MCF 10A (cell line): ENCODE measurements at regions of chr13 and their contacts with region 1.

Region 1: DNA sequence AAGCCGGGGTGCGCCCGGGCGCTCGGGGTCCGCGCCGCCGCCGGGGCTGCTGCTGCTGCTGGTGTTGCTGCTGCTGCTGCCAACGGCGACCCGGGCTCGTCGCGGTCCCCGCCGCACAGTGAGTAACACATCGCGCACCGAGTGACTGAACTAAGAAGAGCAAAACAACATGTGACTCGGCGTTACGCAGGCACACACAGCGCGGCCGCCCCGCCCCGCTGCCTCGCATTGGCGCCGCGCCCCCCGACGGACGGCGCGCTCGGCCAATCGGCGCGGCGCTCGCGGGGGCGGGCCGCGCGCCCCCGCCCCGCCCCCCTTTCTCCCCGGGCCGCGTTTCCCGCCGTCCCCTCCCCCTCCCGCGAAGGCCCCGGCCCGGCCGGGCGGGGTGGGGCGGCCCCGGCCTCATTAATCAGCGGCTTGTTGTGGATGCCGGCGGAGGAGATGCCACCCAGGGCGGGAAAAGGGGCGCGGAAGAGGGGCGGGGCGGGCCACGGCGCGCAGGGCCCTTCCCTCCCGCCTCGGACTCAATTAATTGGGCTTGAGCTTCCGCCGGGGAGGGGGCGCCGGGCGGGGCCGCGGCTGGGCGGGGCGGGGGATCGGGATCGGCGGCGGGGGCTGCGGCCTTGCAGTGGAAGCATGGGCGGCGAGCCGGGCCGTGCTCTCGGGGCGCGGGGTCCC is at the start of gene IRS2:
- DNase-seq: peak; percentile 92
- H3K4me3 Mint-ChIP-seq: peak within 1 kb of the TSS; percentile 84
- H3K27ac Mint-ChIP-seq: peak within 1 kb of the TSS; percentile 31
- H3K4me1 Mint-ChIP-seq: peaks cover 33% of the 10 kb centered on the region
- H3K27me3 Mint-ChIP-seq: no peaks in the 10 kb centered on the region
- CTCF ChIP-seq: no peak
- total RNA-seq, gene IRS2: 41.8 and 48.5 TPM in 2 replicates

Region 2: GRCh38 chr13:108961542-108962125 is 825.0 kb before region 1 on chr13:
- CTCF ChIA-PET with region 1: interaction called, 10 read pairs
- POLR2A ChIA-PET with region 1: interaction called, 12 read pairs
- intact Hi-C with region 1: loop called (anchors 1 kb)
- DNase-seq: peak; percentile 57
- H3K4me3 Mint-ChIP-seq: no peak overlapping the region
- H3K27ac Mint-ChIP-seq: no peak overlapping the region
- H3K4me1 Mint-ChIP-seq: peaks cover 43% of the 10 kb centered on the region
- H3K27me3 Mint-ChIP-seq: no peaks in the 10 kb centered on the region
- CTCF ChIP-seq: peak; percentile 79

Region 3: GRCh38 chr13:109156181-109156935 is 630.2 kb before region 1 on chr13:
- CTCF ChIA-PET with region 1: interaction called, 6 read pairs
- POLR2A ChIA-PET with region 1: interaction called, 39 read pairs
- intact Hi-C with region 1: no loop called
- DNase-seq: peak; percentile 82
- H3K4me3 Mint-ChIP-seq: peak overlapping the region; percentile 64
- H3K27ac Mint-ChIP-seq: peak overlapping the region; percentile 95
- H3K4me1 Mint-ChIP-seq: peaks cover 61% of the 10 kb centered on the region
- H3K27me3 Mint-ChIP-seq: no peaks in the 10 kb centered on the region
- CTCF ChIP-seq: no peak

Region 4: DNA sequence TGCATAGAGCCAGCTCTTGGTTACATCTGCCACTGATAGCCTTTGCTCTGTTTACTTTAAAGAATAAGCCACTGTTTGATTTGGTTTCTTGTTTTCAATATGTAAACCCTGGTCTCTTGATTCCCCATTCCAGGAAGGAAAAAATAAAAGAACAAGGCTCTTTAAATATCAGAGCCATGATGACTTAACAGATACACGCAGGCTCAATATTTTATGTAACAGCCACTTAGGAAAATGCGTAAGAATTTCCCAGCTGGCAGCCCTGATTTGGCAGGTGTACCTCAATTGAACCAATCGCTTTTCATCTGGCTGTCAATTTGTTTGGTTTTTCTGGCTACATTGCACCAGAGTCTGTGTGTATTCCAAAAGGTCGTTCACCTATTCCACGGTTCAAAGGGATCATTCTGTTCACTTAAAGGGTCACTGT is 65.8 kb before region 1 on chr13:
- CTCF ChIA-PET with region 1: no interaction called
- POLR2A ChIA-PET with region 1: no interaction called
- intact Hi-C with region 1: no loop called
- DNase-seq: no peak
- H3K4me3 Mint-ChIP-seq: no peak overlapping the region
- H3K27ac Mint-ChIP-seq: no peak overlapping the region
- H3K4me1 Mint-ChIP-seq: peaks cover 7% of the 10 kb centered on the region
- H3K27me3 Mint-ChIP-seq: no peaks in the 10 kb centered on the region
- CTCF ChIP-seq: no peak

Region 5: GRCh38 chr13:109945206-109945960 is 158.8 kb after region 1 on chr13:
- CTCF ChIA-PET with region 1: no interaction called
- POLR2A ChIA-PET with region 1: no interaction called
- intact Hi-C with region 1: loop called (anchors 2 kb)
- DNase-seq: peak; percentile 54
- H3K4me3 Mint-ChIP-seq: no peak overlapping the region
- H3K27ac Mint-ChIP-seq: peak overlapping the region; percentile 36
- H3K4me1 Mint-ChIP-seq: peaks cover 6% of the 10 kb centered on the region
- H3K27me3 Mint-ChIP-seq: no peaks in the 10 kb centered on the region
- CTCF ChIP-seq: no peak

Region 6: GRCh38 chr13:109998726-109999533 is 212.3 kb after region 1 on chr13:
- CTCF ChIA-PET with region 1: interaction called, 4 read pairs
- POLR2A ChIA-PET with region 1: interaction called, 10 read pairs
- intact Hi-C with region 1: loop called (anchors 2 kb)
- DNase-seq: peak; percentile 95
- H3K4me3 Mint-ChIP-seq: no peak overlapping the region
- H3K27ac Mint-ChIP-seq: peak overlapping the region; percentile 29
- H3K4me1 Mint-ChIP-seq: peaks cover 37% of the 10 kb centered on the region
- H3K27me3 Mint-ChIP-seq: no peaks in the 10 kb centered on the region
- CTCF ChIP-seq: peak; percentile 14

Region 7: GRCh38 chr13:110012102-110012739 is 225.6 kb after region 1 on chr13:
- CTCF ChIA-PET with region 1: interaction called, 3 read pairs
- POLR2A ChIA-PET with region 1: interaction called, 10 read pairs
- intact Hi-C with region 1: no loop called
- DNase-seq: peak; percentile 63
- H3K4me3 Mint-ChIP-seq: peak overlapping the region; percentile 6
- H3K27ac Mint-ChIP-seq: peak overlapping the region; percentile 92
- H3K4me1 Mint-ChIP-seq: peaks cover 47% of the 10 kb centered on the region
- H3K27me3 Mint-ChIP-seq: no peaks in the 10 kb centered on the region
- CTCF ChIP-seq: no peak

Region 8: DNA sequence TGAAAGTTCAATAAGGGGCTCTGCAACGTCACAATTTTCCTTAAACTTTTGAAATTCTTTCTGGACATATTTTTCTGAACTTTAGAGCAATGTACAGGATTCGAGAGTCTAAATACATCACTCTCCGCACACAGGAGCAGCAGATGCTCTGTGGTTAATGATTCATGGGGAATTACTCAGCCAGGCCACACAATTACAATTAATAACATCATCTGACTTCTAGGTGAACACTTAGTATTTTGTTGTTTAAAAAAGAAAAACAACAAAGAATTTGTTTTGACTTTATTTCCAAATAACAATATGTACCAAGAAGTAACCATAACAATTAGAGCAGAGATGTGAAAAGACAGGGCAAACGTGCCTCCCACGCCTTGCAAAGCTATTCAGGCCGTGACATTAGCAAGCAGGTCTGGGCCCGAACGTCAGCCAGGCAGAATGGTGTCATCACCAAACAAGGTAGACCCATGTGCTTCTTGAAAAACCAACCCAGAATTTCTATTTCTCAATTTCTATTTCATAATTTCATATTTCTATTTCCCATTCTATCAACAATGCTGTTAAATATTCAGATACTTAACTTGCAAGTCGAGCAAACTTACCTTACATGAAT is 284.0 kb after region 1 on chr13:
- CTCF ChIA-PET with region 1: no interaction called
- POLR2A ChIA-PET with region 1: interaction called, 12 read pairs
- intact Hi-C with region 1: no loop called
- DNase-seq: peak; percentile 78
- H3K4me3 Mint-ChIP-seq: peak overlapping the region; percentile 50
- H3K27ac Mint-ChIP-seq: peak overlapping the region; percentile 98
- H3K4me1 Mint-ChIP-seq: peaks cover 41% of the 10 kb centered on the region
- H3K27me3 Mint-ChIP-seq: no peaks in the 10 kb centered on the region
- CTCF ChIP-seq: no peak